Psoas muscle (tissue), 8 donors: ENCODE measurements at regions of chr2 and their contacts with region 1.

Region 1: GRCh38 chr2:226799181-226799975 is at the start of gene IRS1:
- DNase-seq: peak; percentile 77 to 87
- ATAC-seq: peak; percentile 25 to 48 (median 38)
- H3K4me3 ChIP-seq: peak within 1 kb of the TSS; percentile 89
- H3K27ac ChIP-seq: peak within 1 kb of the TSS; percentile 99
- H3K4me1 ChIP-seq: peaks cover 44% of the 10 kb centered on the region
- H3K27me3 ChIP-seq: no peaks in the 10 kb centered on the region
- CTCF ChIP-seq: peak; percentile 44
- total RNA-seq, gene IRS1: 6.1 to 12.2 (median 11.6) TPM

Region 2: GRCh38 chr2:225889446-225889850 is 909.9 kb before region 1 on chr2:
- intact Hi-C with region 1: loop called in 1 of 2 experiments (anchors 5 kb)
- DNase-seq: no peak
- ATAC-seq: peak; percentile 70 to 91 (median 76)
- H3K4me3 ChIP-seq: no peak overlapping the region
- H3K27ac ChIP-seq: no peak overlapping the region
- H3K4me1 ChIP-seq: no peaks in the 10 kb centered on the region
- H3K27me3 ChIP-seq: no peaks in the 10 kb centered on the region
- CTCF ChIP-seq: peak; percentile 84

Region 3: GRCh38 chr2:226215902-226216503 is 583.4 kb before region 1 on chr2:
- intact Hi-C with region 1: loop called (anchors 5 to 10 kb)
- DNase-seq: peak in 1 of 2 donors; percentile 16
- ATAC-seq: peak; percentile 62 to 88 (median 81)
- H3K4me3 ChIP-seq: no peak overlapping the region
- H3K27ac ChIP-seq: no peak overlapping the region
- H3K4me1 ChIP-seq: peaks cover 2% of the 10 kb centered on the region
- H3K27me3 ChIP-seq: no peaks in the 10 kb centered on the region
- CTCF ChIP-seq: peak; percentile 46

Region 4: DNA sequence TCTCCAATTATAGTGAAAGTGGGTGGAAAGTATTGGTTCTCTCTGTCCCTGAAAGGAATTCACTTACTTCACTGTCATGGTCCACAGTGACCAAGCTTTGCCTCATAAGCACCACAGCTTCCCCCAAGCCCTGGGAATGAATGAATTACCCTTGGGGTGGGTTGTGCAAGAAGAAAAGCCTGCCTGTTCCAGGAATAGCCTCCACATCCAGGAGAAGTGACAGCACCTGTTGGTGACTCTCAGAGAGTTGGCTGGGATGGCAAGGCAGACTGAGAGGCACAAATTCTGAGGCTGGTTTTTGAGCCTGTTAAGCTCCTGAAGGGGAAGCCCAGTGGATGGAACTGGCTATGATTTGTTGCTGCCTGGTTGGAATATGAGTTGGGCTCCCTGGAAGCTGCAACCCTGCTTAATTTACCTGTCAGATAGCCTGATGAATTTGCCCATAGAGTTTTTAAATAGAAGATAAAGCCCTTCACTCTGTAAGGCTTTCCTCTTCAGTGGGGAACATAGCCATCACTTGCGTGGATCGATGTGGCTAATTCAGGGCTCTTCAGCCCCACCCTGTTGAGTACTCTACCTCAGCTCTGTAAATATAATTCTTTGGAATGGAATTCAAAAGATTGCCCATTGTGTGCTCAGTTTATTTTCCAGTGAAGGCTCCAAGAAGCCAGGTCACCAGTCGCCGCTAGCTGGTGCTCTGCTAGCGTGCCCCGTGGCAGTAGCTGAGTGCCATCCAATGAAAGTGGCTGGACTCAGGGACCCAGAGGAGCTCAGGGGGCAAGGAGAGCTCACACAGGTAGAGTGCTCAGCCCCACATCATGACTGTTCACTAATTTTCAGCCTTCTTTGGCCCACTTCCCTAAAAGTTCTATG is 479.1 kb before region 1 on chr2:
- intact Hi-C with region 1: loop called in 1 of 2 experiments (anchors 2 kb)
- DNase-seq: peak; percentile 27 to 70
- ATAC-seq: peak; percentile 93 to 97 (median 96)
- H3K4me3 ChIP-seq: peak overlapping the region; percentile 45
- H3K27ac ChIP-seq: peak overlapping the region; percentile 84
- H3K4me1 ChIP-seq: peaks cover 10% of the 10 kb centered on the region
- H3K27me3 ChIP-seq: no peaks in the 10 kb centered on the region
- CTCF ChIP-seq: peak; percentile 54

Region 5: GRCh38 chr2:226411727-226412360 is 387.5 kb before region 1 on chr2:
- intact Hi-C with region 1: no loop called
- DNase-seq: no peak
- ATAC-seq: no peak
- H3K4me3 ChIP-seq: no peak overlapping the region
- H3K27ac ChIP-seq: no peak overlapping the region
- H3K4me1 ChIP-seq: no peaks in the 10 kb centered on the region
- H3K27me3 ChIP-seq: no peaks in the 10 kb centered on the region
- CTCF ChIP-seq: no peak

Region 6: GRCh38 chr2:226583715-226584114 is 215.7 kb before region 1 on chr2:
- intact Hi-C with region 1: loop called in 1 of 2 experiments (anchors 5 kb)
- DNase-seq: no peak
- ATAC-seq: no peak
- H3K4me3 ChIP-seq: no peak overlapping the region
- H3K27ac ChIP-seq: no peak overlapping the region
- H3K4me1 ChIP-seq: peaks cover 16% of the 10 kb centered on the region
- H3K27me3 ChIP-seq: no peaks in the 10 kb centered on the region
- CTCF ChIP-seq: no peak

Region 7: GRCh38 chr2:226742347-226742746 is 57.0 kb before region 1 on chr2:
- intact Hi-C with region 1: loop called in 1 of 2 experiments (anchors 5 kb)
- DNase-seq: peak; percentile 40 to 69
- ATAC-seq: peak; percentile 74 to 91 (median 89)
- H3K4me3 ChIP-seq: peak overlapping the region; percentile 48
- H3K27ac ChIP-seq: peak overlapping the region; percentile 91
- H3K4me1 ChIP-seq: peaks cover 58% of the 10 kb centered on the region
- H3K27me3 ChIP-seq: no peaks in the 10 kb centered on the region
- CTCF ChIP-seq: no peak